ENCODE measurements at regions of chr4 and their contacts with region 1.

Region 1: GRCh38 chr4:26081795-26082498 is 167.9 kb downstream of the SMIM20 start:
- DNase-seq: no peak
- H3K4me3 ChIP-seq: no peak overlapping the region
- H3K27ac ChIP-seq: no peak overlapping the region
- H3K4me1 ChIP-seq: peaks cover 12% of the 10 kb centered on the region
- H3K27me3 ChIP-seq: peaks cover 25% of the 10 kb centered on the region
- CTCF ChIP-seq: peak; percentile 79

Region 2: DNA sequence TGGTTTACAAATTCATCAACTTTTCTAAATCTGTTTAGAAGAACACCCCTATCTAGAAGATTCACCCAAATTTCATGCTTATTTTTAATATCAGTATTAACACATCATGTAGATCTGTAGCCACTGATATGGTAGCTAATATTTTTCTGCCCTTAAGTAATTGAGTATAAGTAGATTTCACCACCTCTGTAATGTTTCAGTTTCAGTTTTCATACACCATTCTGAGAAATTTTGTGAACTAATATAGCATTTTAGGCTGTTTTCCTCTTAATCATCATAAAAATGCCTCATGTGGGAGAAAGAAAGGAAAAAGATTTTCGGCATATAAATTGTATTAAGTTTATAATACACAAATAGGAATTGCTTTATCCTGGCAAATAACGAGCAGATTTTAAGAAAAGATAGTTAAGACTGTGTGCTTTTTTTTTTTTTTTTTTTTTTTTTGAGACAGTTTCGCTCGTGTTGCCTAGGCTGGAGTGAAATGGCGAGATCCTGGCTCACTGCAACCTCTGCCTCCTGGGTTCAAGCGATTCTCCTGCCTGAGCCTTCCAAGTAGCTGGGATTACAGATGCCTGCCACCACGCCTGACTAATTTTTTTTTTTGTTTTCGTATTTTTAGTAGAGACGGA is 217.4 kb after region 1 on chr4:
- intact Hi-C with region 1: loop called (anchors 10 kb)
- DNase-seq: no peak
- H3K4me3 ChIP-seq: no peak overlapping the region
- H3K27ac ChIP-seq: no peak overlapping the region
- H3K4me1 ChIP-seq: no peaks in the 10 kb centered on the region
- H3K27me3 ChIP-seq: no peaks in the 10 kb centered on the region
- CTCF ChIP-seq: no peak